ENCODE measurements at regions of chr3 and their contacts with region 1.

Region 1: DNA sequence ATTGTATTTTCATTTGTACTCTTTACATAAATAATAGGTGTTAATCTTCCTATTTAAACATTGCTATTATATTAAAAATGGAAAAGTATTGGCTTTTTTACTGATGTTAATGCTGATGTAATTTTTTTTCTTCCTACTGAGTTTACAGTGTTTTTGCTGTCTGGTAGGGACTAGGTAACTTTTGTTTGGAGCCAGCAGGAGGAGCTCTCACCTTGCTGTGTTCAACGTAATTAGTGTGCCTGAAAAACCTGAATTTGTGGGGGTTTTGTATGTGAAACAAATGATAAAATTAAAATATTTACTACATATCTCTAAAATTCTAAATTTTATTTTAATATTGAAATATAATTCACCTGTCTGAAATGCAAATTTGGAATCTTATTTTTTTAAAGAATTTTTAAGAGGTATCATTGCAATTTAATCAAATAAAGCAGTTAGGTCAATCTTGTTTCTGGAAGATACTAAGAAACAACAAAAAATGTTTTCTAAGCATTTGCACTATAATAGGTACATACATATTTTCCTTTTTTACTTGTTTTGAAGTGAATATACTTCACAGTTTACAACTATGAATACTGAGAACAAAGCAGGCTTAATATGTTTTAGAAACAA is 48.8 kb downstream of the EPHA6 start:
- DNase-seq: peak; percentile 8
- H3K4me3 ChIP-seq: no peak overlapping the region
- H3K27ac ChIP-seq: no peak overlapping the region
- H3K4me1 ChIP-seq: no peaks in the 10 kb centered on the region
- H3K27me3 ChIP-seq: no peaks in the 10 kb centered on the region
- CTCF ChIP-seq: peak; percentile 82 to 88

Region 2: DNA sequence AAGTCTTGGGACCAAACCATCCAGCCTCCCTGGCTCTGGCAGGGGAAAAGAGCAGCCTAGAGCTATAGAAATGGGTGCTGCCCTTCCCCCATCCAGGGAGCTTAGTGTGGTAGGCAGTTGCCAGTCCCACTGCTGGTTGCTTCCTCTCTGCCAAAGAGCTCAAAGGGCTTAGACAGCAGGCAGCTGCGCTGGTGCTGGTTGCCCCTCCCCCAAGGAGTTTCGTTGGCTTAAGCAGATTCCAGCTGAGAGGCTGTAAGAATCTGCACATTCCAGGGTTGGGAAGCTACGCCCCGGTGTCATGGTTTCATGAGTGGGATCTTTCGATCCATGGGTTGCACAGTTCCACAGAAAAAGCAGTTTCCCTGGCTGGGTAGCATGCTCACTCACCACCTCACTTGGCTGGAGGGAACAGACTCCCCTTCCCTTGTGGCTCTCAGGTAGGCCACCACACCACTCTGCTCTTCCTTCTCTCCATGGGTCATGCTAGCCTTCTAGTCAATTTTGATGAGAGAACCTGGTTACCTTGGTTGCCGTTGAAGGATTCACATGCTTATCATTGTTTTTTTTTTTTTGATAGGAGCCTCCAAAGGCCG is 146.3 kb after region 1 on chr3:
- CTCF ChIA-PET with region 1: no interaction called
- dilution Hi-C with region 1: no loop called
- in situ Hi-C with region 1: loop called in 1 of 2 experiments (anchors 25 kb)
- intact Hi-C with region 1: no loop called
- DNase-seq: no peak
- H3K4me3 ChIP-seq: no peak overlapping the region
- H3K27ac ChIP-seq: no peak overlapping the region
- H3K4me1 ChIP-seq: no peaks in the 10 kb centered on the region
- H3K27me3 ChIP-seq: no peaks in the 10 kb centered on the region
- CTCF ChIP-seq: no peak

Region 3: DNA sequence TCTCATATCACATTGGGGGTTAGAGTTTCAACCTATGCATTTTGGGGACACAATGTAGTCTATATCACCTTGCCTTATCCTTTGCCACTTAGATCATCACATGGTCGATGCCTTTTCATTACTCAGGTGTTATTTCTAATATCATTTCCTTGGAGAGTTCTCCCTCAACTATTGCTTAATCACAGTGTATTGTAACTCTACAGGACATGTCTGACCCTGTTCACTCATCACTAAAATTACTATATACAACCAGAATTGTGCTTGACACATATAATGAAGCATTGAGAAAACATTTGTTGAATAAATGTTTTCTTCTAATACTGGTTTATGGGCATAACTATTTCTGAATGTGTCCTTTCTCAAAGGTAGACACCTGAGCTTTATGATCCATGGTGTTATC is 158.5 kb after region 1 on chr3:
- CTCF ChIA-PET with region 1: interaction called, 3 read pairs
- dilution Hi-C with region 1: no loop called
- in situ Hi-C with region 1: loop called in 1 of 2 experiments (anchors 25 kb)
- intact Hi-C with region 1: loop called (anchors 1 kb)
- DNase-seq: peak; percentile 16
- H3K4me3 ChIP-seq: no peak overlapping the region
- H3K27ac ChIP-seq: no peak overlapping the region
- H3K4me1 ChIP-seq: no peaks in the 10 kb centered on the region
- H3K27me3 ChIP-seq: no peaks in the 10 kb centered on the region
- CTCF ChIP-seq: no peak

Region 4: GRCh38 chr3:97138914-97139541 is 275.8 kb after region 1 on chr3:
- CTCF ChIA-PET with region 1: no interaction called
- dilution Hi-C with region 1: no loop called
- in situ Hi-C with region 1: no loop called
- intact Hi-C with region 1: loop called (anchors 1 kb)
- DNase-seq: peak; percentile 1
- H3K4me3 ChIP-seq: no peak overlapping the region
- H3K27ac ChIP-seq: no peak overlapping the region
- H3K4me1 ChIP-seq: no peaks in the 10 kb centered on the region
- H3K27me3 ChIP-seq: no peaks in the 10 kb centered on the region
- CTCF ChIP-seq: peak; percentile 55 to 57

Region 5: GRCh38 chr3:97658668-97659285 is 795.5 kb after region 1 on chr3:
- CTCF ChIA-PET with region 1: no interaction called
- dilution Hi-C with region 1: no loop called
- in situ Hi-C with region 1: loop called (anchors 10 to 25 kb)
- intact Hi-C with region 1: loop called (anchors 1 kb)
- DNase-seq: peak; percentile 9
- H3K4me3 ChIP-seq: no peak overlapping the region
- H3K27ac ChIP-seq: no peak overlapping the region
- H3K4me1 ChIP-seq: no peaks in the 10 kb centered on the region
- H3K27me3 ChIP-seq: no peaks in the 10 kb centered on the region
- CTCF ChIP-seq: peak; percentile 66 to 78

Region 6: GRCh38 chr3:97719156-97719821 is 856.1 kb after region 1 on chr3:
- CTCF ChIA-PET with region 1: no interaction called
- dilution Hi-C with region 1: no loop called
- in situ Hi-C with region 1: no loop called
- intact Hi-C with region 1: loop called (anchors 2 kb)
- DNase-seq: peak; percentile 55
- H3K4me3 ChIP-seq: peak overlapping the region in 1 of 3 experiments; percentile 21
- H3K27ac ChIP-seq: no peak overlapping the region
- H3K4me1 ChIP-seq: no peaks in the 10 kb centered on the region
- H3K27me3 ChIP-seq: no peaks in the 10 kb centered on the region
- CTCF ChIP-seq: peak; percentile 96 to 97